ENCODE measurements at regions of chr2 and their contacts with region 1.

Region 1: DNA sequence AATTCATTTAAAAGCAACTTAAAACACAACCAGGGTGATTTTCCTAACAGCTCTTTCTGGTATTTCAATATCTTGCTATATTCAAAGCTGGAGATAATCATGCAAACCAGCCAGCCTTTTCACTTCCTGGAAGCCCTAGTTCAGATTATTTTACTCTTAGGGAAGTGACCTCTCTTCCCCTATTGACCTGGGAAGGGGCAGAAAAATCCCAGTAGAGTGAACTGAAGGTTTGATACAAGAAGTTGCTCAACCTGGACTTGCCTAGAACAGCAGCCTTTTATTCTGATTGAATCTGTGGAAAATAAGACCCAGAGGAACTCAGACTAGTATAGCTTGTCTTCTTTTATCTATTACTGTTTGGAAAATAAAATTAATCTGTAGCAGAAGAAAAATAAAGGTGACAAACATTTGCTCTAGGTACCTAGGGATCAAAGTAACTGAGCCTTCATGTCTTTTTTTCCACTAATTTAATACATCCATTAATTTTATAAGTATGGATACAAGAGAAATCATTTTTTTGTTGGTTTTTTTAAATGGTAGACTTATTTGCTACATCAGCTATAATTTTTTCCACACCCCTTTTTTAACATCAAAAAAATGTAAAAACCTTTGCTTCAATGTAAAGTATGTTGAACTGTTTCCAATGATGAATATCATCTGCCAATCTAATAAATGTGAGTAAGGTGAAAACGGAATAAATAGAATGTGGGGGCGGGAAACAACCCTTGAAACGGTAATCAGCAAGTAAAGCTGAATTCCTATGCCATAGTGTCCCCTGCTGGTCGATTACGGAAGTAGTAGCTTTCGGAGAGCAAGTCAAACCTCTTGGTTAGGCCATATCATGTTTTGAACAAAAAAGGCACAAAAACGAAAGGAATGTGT is 629.9 kb downstream of the NRXN1 start:
- DNase-seq: peak; percentile 67
- H3K4me3 ChIP-seq: no peak overlapping the region
- H3K27ac ChIP-seq: no peak overlapping the region
- H3K4me1 ChIP-seq: no peaks in the 10 kb centered on the region
- H3K27me3 ChIP-seq: no peaks in the 10 kb centered on the region
- CTCF ChIP-seq: peak; percentile 87

Region 2: GRCh38 chr2:48600204-48600813 is 1801.7 kb before region 1 on chr2:
- CTCF ChIA-PET with region 1: no interaction called
- POLR2A ChIA-PET with region 1: no interaction called
- intact Hi-C with region 1: loop called (anchors 2 kb)
- DNase-seq: peak; percentile 56
- H3K4me3 ChIP-seq: no peak overlapping the region
- H3K27ac ChIP-seq: no peak overlapping the region
- H3K4me1 ChIP-seq: no peaks in the 10 kb centered on the region
- H3K27me3 ChIP-seq: no peaks in the 10 kb centered on the region
- CTCF ChIP-seq: peak; percentile 81

Region 3: DNA sequence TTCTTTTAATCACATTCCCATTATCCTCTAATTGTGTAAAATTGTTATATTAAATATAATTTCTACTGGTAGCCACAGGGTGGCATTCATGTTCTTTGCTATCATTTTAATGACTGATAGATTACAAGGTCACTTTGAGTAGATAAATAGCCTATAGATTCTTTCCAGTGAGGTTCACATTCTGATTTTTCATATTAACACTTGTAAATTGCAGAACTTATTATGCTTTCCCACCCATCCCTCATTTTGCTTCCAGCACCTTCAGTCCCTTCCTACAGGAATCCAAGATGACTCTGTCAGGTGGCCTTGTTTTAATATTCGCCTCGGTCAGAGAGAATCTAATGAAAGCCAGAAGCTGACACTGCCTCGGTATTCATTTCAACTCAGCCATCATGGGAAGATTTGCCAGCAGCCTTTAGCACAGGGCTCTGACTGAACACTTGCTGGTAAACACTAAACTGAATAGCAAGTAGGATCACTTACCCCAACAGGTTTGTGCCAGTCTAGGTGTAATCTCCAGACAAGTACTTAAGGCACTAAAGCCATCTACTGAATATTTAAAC is 1146.5 kb before region 1 on chr2:
- CTCF ChIA-PET with region 1: no interaction called
- POLR2A ChIA-PET with region 1: no interaction called
- intact Hi-C with region 1: loop called (anchors 10 kb)
- DNase-seq: no peak
- H3K4me3 ChIP-seq: no peak overlapping the region
- H3K27ac ChIP-seq: no peak overlapping the region
- H3K4me1 ChIP-seq: no peaks in the 10 kb centered on the region
- H3K27me3 ChIP-seq: no peaks in the 10 kb centered on the region
- CTCF ChIP-seq: no peak

Region 4: GRCh38 chr2:49687918-49688317 is 714.1 kb before region 1 on chr2:
- CTCF ChIA-PET with region 1: interaction called, 4 read pairs
- POLR2A ChIA-PET with region 1: no interaction called
- intact Hi-C with region 1: loop called (anchors 2 kb)
- DNase-seq: peak; percentile 1
- H3K4me3 ChIP-seq: no peak overlapping the region
- H3K27ac ChIP-seq: no peak overlapping the region
- H3K4me1 ChIP-seq: no peaks in the 10 kb centered on the region
- H3K27me3 ChIP-seq: no peaks in the 10 kb centered on the region
- CTCF ChIP-seq: peak; percentile 52; the same call in 1 of the 2 replicates

Region 5: GRCh38 chr2:49714454-49714853 is 687.6 kb before region 1 on chr2:
- CTCF ChIA-PET with region 1: no interaction called
- POLR2A ChIA-PET with region 1: no interaction called
- intact Hi-C with region 1: no loop called
- DNase-seq: peak; percentile 1
- H3K4me3 ChIP-seq: no peak overlapping the region
- H3K27ac ChIP-seq: no peak overlapping the region
- H3K4me1 ChIP-seq: no peaks in the 10 kb centered on the region
- H3K27me3 ChIP-seq: peaks cover 4% of the 10 kb centered on the region
- CTCF ChIP-seq: no peak

Region 6: DNA sequence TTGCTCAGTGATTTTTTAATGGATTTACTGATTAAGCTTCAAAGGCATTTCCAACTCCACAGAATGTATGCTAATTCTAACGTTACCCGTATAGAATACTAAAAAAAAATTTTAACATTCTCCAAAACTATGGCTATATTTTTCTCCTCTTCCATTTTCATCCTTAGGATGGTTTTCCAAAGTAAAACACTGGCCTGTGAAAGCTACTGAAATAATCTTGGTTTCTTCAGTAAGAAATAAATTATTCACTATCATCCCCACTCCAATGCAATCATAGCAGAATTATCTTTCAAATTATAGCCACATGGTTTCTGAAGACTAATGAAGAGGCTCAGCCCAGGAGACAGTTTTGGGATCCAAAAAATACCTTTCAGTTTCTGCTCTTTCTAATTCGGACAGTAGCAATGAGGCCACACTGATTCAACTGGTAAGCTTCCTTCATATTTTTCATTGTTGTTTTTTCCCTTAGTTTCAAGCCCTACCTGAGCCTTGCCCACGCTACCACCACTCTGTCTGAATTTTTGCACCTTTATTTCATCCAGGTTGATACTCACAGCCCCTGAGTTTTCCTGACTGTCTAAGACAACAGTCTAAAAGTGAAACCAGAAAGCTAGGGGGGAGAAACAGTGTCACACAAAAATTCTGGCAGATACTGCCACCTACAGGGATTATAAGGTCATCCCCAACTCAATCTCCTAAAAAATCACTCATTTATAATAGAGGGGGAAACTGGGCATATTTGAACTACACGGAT is 258.0 kb before region 1 on chr2:
- CTCF ChIA-PET with region 1: no interaction called
- POLR2A ChIA-PET with region 1: no interaction called
- intact Hi-C with region 1: loop called (anchors 10 kb)
- DNase-seq: peak; percentile 68
- H3K4me3 ChIP-seq: peak overlapping the region; percentile 38
- H3K27ac ChIP-seq: no peak overlapping the region
- H3K4me1 ChIP-seq: no peaks in the 10 kb centered on the region
- H3K27me3 ChIP-seq: no peaks in the 10 kb centered on the region
- CTCF ChIP-seq: peak; percentile 78

Region 7: DNA sequence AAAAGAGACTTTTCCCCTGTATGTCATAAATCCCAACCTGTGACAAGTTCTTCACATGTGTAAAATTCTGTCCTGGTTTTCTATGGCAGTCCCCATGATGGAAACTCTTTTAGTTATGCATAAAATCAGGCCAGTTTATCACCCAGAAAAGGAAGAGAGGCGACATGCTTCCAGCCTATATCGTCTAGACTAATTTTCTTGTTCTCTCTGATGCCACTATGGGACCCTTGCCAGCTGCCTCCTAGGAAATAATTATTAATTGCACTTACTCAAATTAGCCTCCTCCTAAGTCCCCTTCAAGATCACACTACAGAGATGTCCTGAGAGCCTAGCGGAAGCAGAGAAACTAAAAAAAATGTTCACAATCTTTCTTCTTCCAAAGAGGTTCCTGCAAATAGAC is 92.5 kb before region 1 on chr2:
- CTCF ChIA-PET with region 1: no interaction called
- POLR2A ChIA-PET with region 1: no interaction called
- intact Hi-C with region 1: no loop called
- DNase-seq: no peak
- H3K4me3 ChIP-seq: no peak overlapping the region
- H3K27ac ChIP-seq: no peak overlapping the region
- H3K4me1 ChIP-seq: no peaks in the 10 kb centered on the region
- H3K27me3 ChIP-seq: peaks cover 9% of the 10 kb centered on the region
- CTCF ChIP-seq: no peak

Measured in A673 (cell line).